B cell (primary cell): ENCODE measurements at regions of chr2 and their contacts with region 1.

Region 1: DNA sequence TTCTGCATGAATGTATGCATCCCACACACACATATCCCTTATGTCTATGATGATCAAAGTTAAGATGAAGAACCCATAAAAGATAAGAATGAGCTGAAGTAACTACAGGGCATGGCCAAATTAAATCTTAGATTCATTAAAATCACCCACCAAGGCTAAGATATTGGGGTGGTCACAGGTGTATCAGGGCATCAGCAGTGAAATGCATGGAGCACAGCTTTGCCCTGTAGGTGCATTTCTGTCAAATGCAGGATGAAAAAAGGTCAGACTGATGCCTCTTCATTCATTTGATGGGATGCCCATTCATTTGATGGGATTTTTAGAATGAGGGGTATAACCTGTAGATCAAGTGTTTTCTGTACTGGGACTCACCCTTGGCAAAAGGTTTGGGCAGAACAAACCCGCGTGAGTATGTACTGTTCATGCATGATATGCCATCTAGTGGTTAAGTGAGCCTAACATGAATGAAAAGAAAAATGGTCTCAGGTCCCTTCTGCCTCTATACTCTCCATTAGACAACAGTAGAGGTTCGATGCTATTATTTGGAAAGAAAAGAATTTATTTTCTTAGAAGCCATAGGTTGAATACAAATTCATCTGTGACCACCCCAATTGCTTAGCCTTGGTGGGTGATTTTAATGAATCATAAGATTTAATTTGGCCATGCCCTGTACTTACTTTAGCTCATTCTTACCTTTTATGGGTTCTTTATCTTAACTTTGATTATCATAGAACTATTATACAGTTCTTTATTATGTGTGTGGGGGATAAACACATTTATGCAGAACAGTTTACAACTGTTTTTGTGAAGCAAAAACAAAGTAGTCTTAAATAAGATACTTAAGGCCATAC is 43.2 kb upstream of the NOSTRIN start:
- DNase-seq: peak; percentile 55
- ATAC-seq: peak; percentile 41
- H3K4me3 ChIP-seq: no peak overlapping the region
- H3K4me3 Mint-ChIP-seq: no peak overlapping the region
- H3K27ac ChIP-seq: no peak overlapping the region
- H3K27ac Mint-ChIP-seq: no peak overlapping the region
- H3K4me1 ChIP-seq: no peaks in the 10 kb centered on the region
- H3K4me1 Mint-ChIP-seq: peaks cover 4% of the 10 kb centered on the region
- H3K27me3 ChIP-seq: no peaks in the 10 kb centered on the region
- H3K27me3 Mint-ChIP-seq: no peaks in the 10 kb centered on the region
- CTCF ChIP-seq: peak; percentile 61

Region 2: GRCh38 chr2:168712049-168712448 is 47.1 kb before region 1 on chr2:
- CTCF ChIA-PET with region 1: interaction called, 3 read pairs
- POLR2A ChIA-PET with region 1: no interaction called
- intact Hi-C with region 1: loop called (anchors 5 kb)
- DNase-seq: peak; percentile 62
- ATAC-seq: peak; percentile 97
- H3K4me3 ChIP-seq: peak overlapping the region in 1 of 5 experiments; percentile 3
- H3K4me3 Mint-ChIP-seq: peak overlapping the region; percentile 57
- H3K27ac ChIP-seq: peak overlapping the region; percentile 34 to 61
- H3K27ac Mint-ChIP-seq: peak overlapping the region; percentile 81
- H3K4me1 ChIP-seq: peaks cover 11 to 15% of the 10 kb centered on the region in 2 donors
- H3K4me1 Mint-ChIP-seq: peaks cover 13% of the 10 kb centered on the region
- H3K27me3 ChIP-seq: no peaks in the 10 kb centered on the region
- H3K27me3 Mint-ChIP-seq: no peaks in the 10 kb centered on the region
- CTCF ChIP-seq: peak; percentile 22

Region 3: DNA sequence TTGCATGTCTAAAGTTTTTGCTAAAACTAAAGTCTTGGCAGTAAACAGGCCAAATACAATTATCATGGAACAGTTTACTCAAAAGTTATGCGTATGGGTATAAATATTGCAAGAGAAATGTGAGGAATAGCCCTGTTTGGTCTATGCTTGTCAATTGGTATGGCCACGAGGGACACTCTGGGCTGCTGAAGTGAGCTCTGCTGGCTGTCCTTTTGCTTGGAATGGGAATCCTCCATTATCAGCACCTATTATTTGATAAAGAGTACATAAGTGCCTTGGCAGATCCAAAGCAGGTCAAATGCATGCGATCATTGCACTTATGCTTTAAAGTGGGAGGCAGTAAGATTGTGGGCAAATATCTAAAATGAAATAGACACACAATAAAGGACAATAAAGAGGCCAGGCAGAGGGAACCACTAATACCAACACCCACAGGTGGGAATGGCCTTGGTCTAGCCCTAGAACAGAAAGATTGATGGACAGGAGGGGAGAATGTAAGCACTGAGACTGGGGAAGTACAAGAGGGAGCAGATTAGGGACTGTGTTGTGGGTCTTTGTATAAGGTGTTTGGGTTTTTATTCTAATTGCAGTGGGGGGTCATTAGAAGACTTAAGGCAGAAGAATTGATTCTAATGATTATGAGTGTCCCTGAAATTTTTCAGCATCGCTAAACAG is 16.8 kb before region 1 on chr2:
- CTCF ChIA-PET with region 1: no interaction called
- POLR2A ChIA-PET with region 1: no interaction called
- intact Hi-C with region 1: no loop called
- DNase-seq: no peak
- ATAC-seq: no peak
- H3K4me3 ChIP-seq: no peak overlapping the region
- H3K4me3 Mint-ChIP-seq: no peak overlapping the region
- H3K27ac ChIP-seq: no peak overlapping the region
- H3K27ac Mint-ChIP-seq: no peak overlapping the region
- H3K4me1 ChIP-seq: no peaks in the 10 kb centered on the region
- H3K4me1 Mint-ChIP-seq: no peaks in the 10 kb centered on the region
- H3K27me3 ChIP-seq: no peaks in the 10 kb centered on the region
- H3K27me3 Mint-ChIP-seq: no peaks in the 10 kb centered on the region
- CTCF ChIP-seq: no peak